ENCODE measurements at regions of chr17 and their contacts with region 1.

Region 1: DNA sequence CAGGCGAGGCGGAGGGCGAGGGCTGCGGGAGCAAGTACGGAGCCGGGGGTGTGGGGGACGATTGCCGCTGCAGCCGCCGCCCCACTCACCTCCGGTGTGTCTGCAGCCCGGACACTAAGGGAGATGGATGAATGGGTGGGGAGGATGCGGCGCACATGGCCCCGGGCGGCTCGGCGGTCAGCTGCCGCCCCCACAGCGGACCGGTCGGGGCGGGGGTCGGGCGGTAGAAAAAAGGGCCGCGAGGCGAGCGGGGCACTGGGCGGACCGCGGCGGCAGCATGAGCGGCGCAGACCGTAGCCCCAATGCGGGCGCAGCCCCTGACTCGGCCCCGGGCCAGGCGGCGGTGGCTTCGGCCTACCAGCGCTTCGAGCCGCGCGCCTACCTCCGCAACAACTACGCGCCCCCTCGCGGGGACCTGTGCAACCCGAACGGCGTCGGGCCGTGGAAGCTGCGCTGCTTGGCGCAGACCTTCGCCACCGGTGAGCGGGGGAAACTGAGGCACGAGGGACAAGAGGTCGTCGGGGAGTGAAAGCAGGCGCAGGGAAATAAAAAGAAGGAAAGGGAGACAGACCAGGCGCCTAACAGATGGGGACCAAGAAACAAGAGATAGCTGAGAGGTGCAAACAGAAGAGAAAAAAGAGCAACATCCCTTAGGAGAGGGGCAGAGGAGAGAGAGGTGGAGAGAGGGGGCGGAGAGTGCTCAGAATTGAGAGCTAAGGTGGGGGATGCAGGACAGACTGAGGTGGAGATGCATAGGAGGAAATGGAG is at the start of gene PNMT:
- DNase-seq: peak; percentile 70
- ATAC-seq: peak; percentile 83
- H3K4me3 Mint-ChIP-seq: peak within 1 kb of the TSS; percentile 71
- H3K27ac Mint-ChIP-seq: peak within 1 kb of the TSS; percentile 56
- H3K4me1 Mint-ChIP-seq: peaks cover 31% of the 10 kb centered on the region
- H3K27me3 Mint-ChIP-seq: peaks cover 12% of the 10 kb centered on the region
- CTCF ChIP-seq: peak; percentile 44
- total RNA-seq, gene PNMT: not detected in 2 replicates

Region 2: GRCh38 chr17:39653662-39654331 is 14.6 kb before region 1 on chr17:
- CTCF ChIA-PET with region 1: interaction called, 16 read pairs
- POLR2A ChIA-PET with region 1: interaction called, 5 read pairs
- intact Hi-C with region 1: no loop called
- DNase-seq: no peak
- ATAC-seq: peak; percentile 75
- H3K4me3 Mint-ChIP-seq: no peak overlapping the region
- H3K27ac Mint-ChIP-seq: no peak overlapping the region
- H3K4me1 Mint-ChIP-seq: peaks cover 33% of the 10 kb centered on the region
- H3K27me3 Mint-ChIP-seq: no peaks in the 10 kb centered on the region
- CTCF ChIP-seq: no peak

Region 3: GRCh38 chr17:39699818-39700147 is 31.4 kb after region 1 on chr17 and contains the start of gene ERBB2:
- CTCF ChIA-PET with region 1: no interaction called
- POLR2A ChIA-PET with region 1: interaction called, 12 read pairs
- intact Hi-C with region 1: no loop called
- DNase-seq: no peak
- ATAC-seq: no peak
- H3K4me3 Mint-ChIP-seq: peak within 1 kb of the TSS; percentile 6
- H3K27ac Mint-ChIP-seq: no peak within 1 kb of the TSS
- H3K4me1 Mint-ChIP-seq: peaks cover 14% of the 10 kb centered on the region
- H3K27me3 Mint-ChIP-seq: peaks cover 30% of the 10 kb centered on the region
- CTCF ChIP-seq: no peak
- total RNA-seq, gene ERBB2: 4.4 and 7.1 TPM in 2 replicates

Region 4: DNA sequence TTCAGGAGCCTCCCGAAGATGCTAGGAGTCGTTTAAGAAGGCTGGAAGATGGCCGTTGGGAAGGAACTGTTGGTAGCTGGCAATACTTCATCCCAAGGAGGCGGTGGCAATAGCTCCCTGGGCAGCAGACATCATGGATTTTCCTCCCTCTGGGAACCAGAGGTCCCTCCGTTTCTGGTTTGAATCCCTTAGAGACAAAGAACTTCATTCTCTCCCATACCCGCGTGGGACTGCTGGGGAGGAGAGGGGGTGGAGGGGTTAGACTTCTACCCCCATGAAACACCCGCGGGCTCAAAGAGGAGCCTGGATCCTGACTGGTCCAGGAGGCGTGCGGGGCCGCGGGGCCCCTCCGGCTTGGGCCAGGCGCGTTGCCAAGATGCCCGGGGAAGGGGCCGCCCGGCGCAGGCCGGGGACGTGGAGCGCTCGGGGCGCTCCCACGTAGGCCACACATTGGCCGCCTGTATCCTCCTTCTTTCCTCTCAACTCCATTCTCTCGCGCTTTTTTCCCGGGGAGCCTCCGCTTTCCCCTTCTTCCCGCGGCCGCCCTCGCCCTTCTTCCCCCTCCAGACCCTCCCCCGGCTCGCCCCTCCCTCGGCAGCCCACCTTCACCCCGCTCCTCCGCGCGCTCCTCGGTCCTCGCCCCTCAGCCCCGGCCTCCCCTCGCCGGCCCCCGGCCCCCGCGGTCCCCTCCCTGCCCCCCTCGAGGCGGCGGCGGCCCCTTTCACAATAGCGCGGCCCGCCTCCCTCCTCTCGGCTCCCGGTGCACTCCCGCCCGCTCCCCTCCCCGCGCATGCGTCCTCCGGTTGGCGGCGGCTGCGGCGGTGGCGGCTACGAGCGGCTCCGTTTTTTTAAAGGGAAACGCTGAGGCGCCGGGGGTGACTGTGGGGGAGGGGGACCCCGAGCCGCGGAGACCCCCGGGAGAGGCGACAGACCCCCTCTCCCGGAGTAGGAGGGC is 453.1 kb after region 1 on chr17 and contains the start of gene MSL1:
- CTCF ChIA-PET with region 1: no interaction called
- POLR2A ChIA-PET with region 1: no interaction called
- intact Hi-C with region 1: loop called (anchors 5 kb)
- DNase-seq: peak; percentile 84
- ATAC-seq: peak; percentile 68
- H3K4me3 Mint-ChIP-seq: peak within 1 kb of the TSS; percentile 82
- H3K27ac Mint-ChIP-seq: peak within 1 kb of the TSS; percentile 50
- H3K4me1 Mint-ChIP-seq: peaks cover 39% of the 10 kb centered on the region
- H3K27me3 Mint-ChIP-seq: no peaks in the 10 kb centered on the region
- CTCF ChIP-seq: no peak
- total RNA-seq, gene MSL1: 84.5 and 101 TPM in 2 replicates

Measured in activated B cell treated with CpG ODN at 0.5 μM for 24 hours (primary cell).